Activated T-helper 1 cell treated with anti-CD3 and anti-CD28 coated beads, Interleukin-12 subunit alpha, Interleukin-12 subunit beta, Interleukin-2, Interleukin-4 antibody, amounts not matched to agents 30 ng/mL and 10 ng/mL and 1 ng/mL, durations not matched to agents 14 hours and 24 hours and 36 hours (primary cell): ENCODE measurements at regions of chr20 and their contacts with region 1.

Region 1: DNA sequence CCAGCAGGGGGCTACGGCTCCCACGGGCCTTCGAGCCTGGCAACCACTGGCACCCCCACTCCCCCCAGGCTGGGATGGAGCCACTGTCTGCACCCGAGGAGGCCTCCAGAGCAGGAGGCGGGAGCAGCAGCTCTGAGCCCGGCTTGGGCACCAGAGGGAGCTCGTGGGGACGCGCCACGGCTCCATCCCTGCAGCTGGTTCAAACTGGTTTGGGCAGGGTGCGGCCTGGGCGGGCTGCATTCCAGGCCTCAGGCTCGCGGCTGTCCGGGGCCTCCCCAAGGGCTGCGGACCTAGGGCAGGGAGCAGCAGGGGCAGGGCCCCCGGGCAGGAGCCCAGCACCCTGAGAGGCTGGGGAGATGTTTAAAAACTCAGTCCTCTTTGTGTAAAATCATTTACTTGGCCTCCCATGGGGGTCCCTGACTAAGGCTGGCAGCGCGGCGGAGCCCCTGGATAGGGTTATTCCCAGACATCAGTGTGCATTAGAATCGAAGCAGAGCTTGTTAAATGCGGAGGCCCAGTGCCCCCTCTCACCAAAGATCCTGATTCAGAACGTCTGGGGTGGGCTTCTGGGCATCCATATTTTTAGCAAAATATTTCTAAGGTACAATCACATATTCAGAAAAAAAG is 4.1 kb upstream of the BCAS4 start:
- DNase-seq: peak; percentile 71
- H3K4me3 Mint-ChIP-seq: no peak overlapping the region
- H3K27ac Mint-ChIP-seq: peak overlapping the region; percentile 52
- H3K4me1 Mint-ChIP-seq: peaks cover 5% of the 10 kb centered on the region
- H3K27me3 Mint-ChIP-seq: peaks cover 6% of the 10 kb centered on the region

Region 2: DNA sequence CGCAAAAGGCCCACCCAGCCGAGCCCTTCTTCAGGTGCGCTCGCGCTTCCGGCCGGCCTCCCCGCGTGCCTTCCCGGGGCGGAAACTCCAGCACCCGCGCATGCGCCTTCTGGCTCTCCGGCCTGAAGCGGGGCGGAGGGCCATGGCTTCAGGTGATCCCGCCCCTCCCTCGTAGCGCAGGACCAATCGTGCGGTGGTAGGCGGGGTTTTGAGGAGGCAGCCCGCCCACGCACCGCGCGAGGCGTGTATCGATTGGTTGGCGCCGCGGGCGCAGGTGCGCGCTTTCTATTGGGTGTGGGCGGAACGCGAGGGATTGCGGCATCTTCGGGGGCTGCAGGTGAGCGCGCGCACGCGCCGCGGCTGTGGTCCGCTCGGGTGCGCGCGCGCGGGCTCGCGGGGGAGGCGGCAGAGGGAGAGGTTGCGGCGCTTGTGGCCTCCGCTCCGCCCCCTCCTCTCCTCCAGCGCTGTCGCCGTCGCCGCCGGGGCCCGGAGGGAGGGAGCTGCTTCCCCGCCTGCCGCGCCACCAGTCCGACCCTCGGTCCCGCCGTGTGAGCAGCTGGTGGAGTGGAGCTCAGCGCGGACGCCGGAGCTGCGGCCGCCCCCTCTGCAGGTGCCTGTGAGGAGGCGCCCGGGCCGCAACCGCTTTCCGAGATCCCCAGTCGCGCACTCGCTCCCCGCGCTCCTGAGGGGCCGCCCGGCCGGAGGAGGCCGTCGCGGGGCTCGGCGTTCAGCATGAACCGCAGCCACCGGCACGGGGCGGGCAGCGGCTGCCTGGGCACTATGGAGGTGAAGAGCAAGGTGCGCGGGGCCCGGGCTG is 59.5 kb before region 1 on chr20 and contains the start of gene PARD6B:
- intact Hi-C with region 1: loop called (anchors 2 kb)
- DNase-seq: peak; percentile 99
- H3K4me3 Mint-ChIP-seq: peak within 1 kb of the TSS; percentile 86
- H3K27ac Mint-ChIP-seq: peak within 1 kb of the TSS; percentile 92
- H3K4me1 Mint-ChIP-seq: peaks cover 38% of the 10 kb centered on the region
- H3K27me3 Mint-ChIP-seq: peaks cover 1% of the 10 kb centered on the region
- total RNA-seq, gene PARD6B: 6.3 and 7.1 TPM in 2 replicates

Region 3: DNA sequence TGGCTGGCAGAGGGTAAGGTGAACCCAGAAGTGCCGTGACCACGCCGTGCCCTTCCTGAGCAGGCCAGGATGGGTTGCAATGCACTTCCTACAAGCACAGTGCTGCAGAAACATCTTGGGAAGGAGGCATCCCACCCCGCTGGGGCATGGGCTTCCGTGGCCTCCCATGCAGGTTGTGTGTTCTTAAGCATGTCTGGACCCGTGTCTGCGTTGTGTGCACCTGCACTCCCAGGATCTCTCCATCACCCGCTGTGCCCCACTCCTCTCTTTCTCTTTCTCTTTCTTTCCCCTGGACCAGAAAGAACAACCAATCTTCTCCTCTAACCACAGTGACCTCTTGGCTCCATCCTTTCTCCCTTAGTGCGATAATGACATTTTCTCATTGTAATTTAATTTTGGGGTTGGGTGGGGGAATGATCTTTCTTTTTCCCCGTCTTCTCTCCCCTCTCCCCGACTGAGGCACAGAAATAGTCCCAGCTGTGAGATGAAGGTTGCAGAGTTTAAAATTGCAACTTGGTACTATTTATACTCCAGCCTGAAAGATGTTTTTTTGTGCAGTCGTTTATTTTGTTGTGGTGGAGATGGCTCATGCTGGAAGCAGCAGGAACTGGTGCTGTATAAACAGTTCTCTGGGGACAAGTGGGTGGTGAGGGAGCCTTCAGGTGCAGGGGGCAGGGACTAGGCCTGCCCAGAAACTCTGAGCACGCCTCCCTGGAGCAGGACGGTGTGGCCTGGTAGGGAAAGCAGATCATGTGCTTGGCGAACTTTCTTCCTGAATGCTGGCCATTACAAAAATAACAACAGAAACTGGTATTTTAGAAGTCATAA is 24.6 kb after region 1 on chr20:
- intact Hi-C with region 1: loop called (anchors 1 kb)
- DNase-seq: no peak
- H3K4me3 Mint-ChIP-seq: peak overlapping the region; percentile 61
- H3K27ac Mint-ChIP-seq: peak overlapping the region; percentile 77
- H3K4me1 Mint-ChIP-seq: peaks cover 38% of the 10 kb centered on the region
- H3K27me3 Mint-ChIP-seq: peaks cover 4% of the 10 kb centered on the region

Region 4: GRCh38 chr20:50929299-50930138 is 138.8 kb after region 1 on chr20:
- intact Hi-C with region 1: loop called (anchors 1 kb)
- DNase-seq: peak; percentile 91
- H3K4me3 Mint-ChIP-seq: peak overlapping the region; percentile 95
- H3K27ac Mint-ChIP-seq: peak overlapping the region; percentile 95
- H3K4me1 Mint-ChIP-seq: peaks cover 66% of the 10 kb centered on the region
- H3K27me3 Mint-ChIP-seq: no peaks in the 10 kb centered on the region

Region 5: GRCh38 chr20:50987592-50988210 is 196.9 kb after region 1 on chr20:
- intact Hi-C with region 1: loop called (anchors 10 kb)
- DNase-seq: peak; percentile 56
- H3K4me3 Mint-ChIP-seq: no peak overlapping the region
- H3K27ac Mint-ChIP-seq: no peak overlapping the region
- H3K4me1 Mint-ChIP-seq: peaks cover 5% of the 10 kb centered on the region
- H3K27me3 Mint-ChIP-seq: peaks cover 17% of the 10 kb centered on the region